Right ventricle myocardium inferior (tissue), 1 donor: ENCODE measurements at regions of chr9 and their contacts with region 1.

Region 1: DNA sequence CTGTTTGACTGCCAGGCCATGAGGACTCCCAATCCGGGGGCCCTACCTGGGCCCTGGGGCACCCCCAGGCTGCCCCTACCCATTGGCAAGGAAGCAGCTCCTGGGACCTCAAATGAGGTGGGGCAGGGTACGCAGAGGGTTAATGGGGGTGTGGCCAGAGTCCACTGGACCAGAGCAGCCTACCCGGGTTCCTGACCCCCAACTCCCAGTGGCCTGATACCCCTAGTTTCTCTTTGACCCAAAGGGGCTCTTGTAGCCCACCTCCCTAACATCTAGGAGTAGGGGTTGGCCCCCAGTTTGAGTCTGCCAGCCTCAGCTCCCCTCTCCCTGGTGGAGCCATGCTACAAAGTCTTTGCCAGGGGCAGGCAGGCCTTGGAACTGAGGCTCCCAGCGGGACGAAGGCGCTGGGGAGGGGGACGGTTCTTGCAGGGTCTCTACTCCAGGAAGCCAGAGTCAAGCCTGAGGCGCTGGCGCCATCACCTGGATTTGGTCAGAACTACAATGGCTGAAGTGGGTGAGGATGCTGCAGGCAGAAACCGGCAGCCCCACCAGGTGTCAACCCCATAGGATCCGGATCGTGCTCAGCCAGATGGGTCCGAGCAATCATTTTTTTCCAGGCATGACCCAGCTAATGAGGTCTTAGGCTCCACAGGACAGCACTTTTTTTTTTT is 8.4 kb upstream of the CERCAM start:
- DNase-seq: no peak
- ATAC-seq: no peak

Region 2: GRCh38 chr9:128296337-128297220 is 115.7 kb before region 1 on chr9:
- intact Hi-C with region 1: loop called (anchors 5 kb)
- DNase-seq: no peak
- ATAC-seq: no peak

Region 3: GRCh38 chr9:128370826-128371621 is 41.2 kb before region 1 on chr9 and contains the start of gene URM1:
- intact Hi-C with region 1: loop called (anchors 5 kb)
- DNase-seq: peak; percentile 98
- ATAC-seq: peak; percentile 97
- total RNA-seq, gene URM1: 52.9 TPM